ENCODE measurements at regions of chr5 and their contacts with region 1.

Region 1: DNA sequence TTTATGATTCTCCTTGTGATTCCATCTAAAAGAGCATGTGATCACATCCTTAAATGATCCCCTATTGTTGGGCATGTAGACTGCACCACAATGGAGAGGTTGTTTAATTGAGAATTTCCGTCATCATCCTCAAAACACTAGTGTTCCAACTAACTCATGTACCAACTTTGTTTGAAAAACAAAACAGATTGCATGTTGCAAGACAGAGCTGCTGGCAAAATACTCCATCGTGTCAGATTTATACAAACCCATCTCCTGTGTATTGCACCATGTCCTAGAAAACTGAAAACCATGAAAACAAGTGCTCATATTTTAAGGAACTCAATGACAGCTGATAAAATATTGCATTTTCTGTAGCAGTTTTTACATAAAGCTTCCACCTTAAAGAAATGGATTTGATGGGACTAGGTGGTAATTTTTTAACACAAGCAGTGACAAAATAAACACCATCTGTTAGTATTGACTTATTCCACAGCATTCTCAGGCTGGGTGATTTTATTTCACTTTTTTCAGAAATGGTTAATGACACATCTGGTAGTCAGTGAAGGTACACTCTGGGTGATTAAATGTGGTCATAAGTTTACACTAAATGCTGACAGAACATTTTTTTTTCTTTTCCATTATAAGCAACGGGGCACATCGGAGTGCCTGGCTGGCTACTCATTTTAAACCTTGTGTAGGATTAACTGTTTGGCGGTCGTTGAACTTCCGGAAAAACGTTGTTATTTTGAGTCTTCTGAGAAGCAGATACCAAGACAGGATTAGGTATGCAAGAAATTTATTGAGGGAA is 602.9 kb upstream of the WWC1 start:
- DNase-seq: no peak
- ATAC-seq: no peak
- H3K4me3 ChIP-seq: no peak overlapping the region
- H3K27ac ChIP-seq: no peak overlapping the region
- H3K4me1 ChIP-seq: no peaks in the 10 kb centered on the region
- H3K27me3 ChIP-seq: no peaks in the 10 kb centered on the region
- CTCF ChIP-seq: no peak

Region 2: GRCh38 chr5:167513381-167513780 is 175.2 kb before region 1 on chr5:
- intact Hi-C with region 1: no loop called
- DNase-seq: no peak
- ATAC-seq: no peak
- H3K4me3 ChIP-seq: no peak overlapping the region
- H3K27ac ChIP-seq: no peak overlapping the region
- H3K4me1 ChIP-seq: no peaks in the 10 kb centered on the region
- H3K27me3 ChIP-seq: peaks cover 0 to 2% (median 0%) of the 10 kb centered on the region in 3 donors
- CTCF ChIP-seq: no peak

Region 3: DNA sequence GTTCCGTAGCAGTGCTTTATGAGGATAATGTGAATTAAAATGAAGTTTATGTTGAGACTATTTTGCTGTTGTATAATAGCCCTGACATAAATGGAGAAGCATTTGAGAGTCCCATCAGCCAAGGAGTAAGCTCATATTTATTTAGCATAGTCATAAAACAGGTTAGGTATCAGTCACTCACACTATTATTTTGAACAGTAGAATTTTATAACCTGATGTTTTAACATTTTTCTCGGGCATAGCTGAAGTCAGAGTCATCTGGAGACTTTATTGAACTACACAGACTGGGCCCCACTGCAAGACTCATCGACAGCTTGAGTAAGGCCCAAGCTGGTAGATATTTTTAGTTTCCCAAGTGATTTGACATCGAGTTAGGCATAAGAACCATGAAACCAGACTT is 17.4 kb before region 1 on chr5:
- intact Hi-C with region 1: loop called in 1 of 2 experiments (anchors 1 kb)
- DNase-seq: no peak
- ATAC-seq: no peak
- H3K4me3 ChIP-seq: no peak overlapping the region
- H3K27ac ChIP-seq: no peak overlapping the region
- H3K4me1 ChIP-seq: no peaks in the 10 kb centered on the region
- H3K27me3 ChIP-seq: no peaks in the 10 kb centered on the region
- CTCF ChIP-seq: no peak

Region 4: DNA sequence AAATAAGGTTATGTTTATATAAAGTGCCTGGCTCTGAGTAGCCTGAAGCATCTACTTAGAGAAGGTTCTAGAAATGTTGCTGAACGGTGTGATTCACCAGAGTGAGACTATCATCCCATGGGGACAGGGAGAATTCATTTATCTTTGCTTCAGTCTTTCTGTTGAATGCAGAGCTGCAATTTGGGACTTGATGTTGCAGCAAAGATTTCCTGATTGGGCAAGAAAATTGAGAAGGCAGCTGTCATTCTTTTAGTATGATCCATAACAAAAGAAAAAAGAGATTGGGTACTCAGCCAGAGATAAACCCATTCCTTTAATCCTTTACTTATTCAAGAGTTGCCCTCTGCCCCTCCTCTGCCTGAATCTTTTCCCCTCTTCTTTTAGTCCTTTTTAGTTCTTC is 146.6 kb after region 1 on chr5:
- intact Hi-C with region 1: no loop called
- DNase-seq: no peak
- ATAC-seq: no peak
- H3K4me3 ChIP-seq: no peak overlapping the region
- H3K27ac ChIP-seq: no peak overlapping the region
- H3K4me1 ChIP-seq: no peaks in the 10 kb centered on the region
- H3K27me3 ChIP-seq: no peaks in the 10 kb centered on the region
- CTCF ChIP-seq: no peak

Measured in psoas muscle (tissue), 8 donors.